ENCODE measurements at regions of chr1 and their contacts with region 1.

Region 1: GRCh38 chr1:8419172-8419571 is 101.3 kb downstream of the SLC45A1 start:
- DNase-seq: no peak
- H3K4me3 ChIP-seq: no peak overlapping the region
- H3K27ac ChIP-seq: no peak overlapping the region
- H3K4me1 ChIP-seq: peaks cover 21 to 28% of the 10 kb centered on the region in 2 experiments; a peak in 3 of 4 replicates
- H3K27me3 ChIP-seq: no peaks in the 10 kb centered on the region
- CTCF ChIP-seq: no peak
- EP300 ChIP-seq: no peak
- RAD21 ChIP-seq: no peak

Region 2: GRCh38 chr1:8409106-8409505 is 10.1 kb before region 1 on chr1:
- CTCF ChIA-PET with region 1: interaction called, 11 read pairs
- POLR2A ChIA-PET with region 1: no interaction called
- DNase-seq: no peak
- H3K4me3 ChIP-seq: no peak overlapping the region; a peak in 1 of 4 replicates
- H3K27ac ChIP-seq: peak overlapping the region; percentile 86 to 91
- H3K4me1 ChIP-seq: peaks cover 42 to 56% of the 10 kb centered on the region in 2 experiments
- H3K27me3 ChIP-seq: no peaks in the 10 kb centered on the region
- CTCF ChIP-seq: peak; percentile 47; the same call in 1 of the 2 replicates
- EP300 ChIP-seq: no peak
- RAD21 ChIP-seq: 0 out of 2 replicates have a peak, but pooled peaks have one; percentile 29